ENCODE measurements at regions of chr10 and their contacts with region 1.

Region 1: GRCh38 chr10:115026056-115026745 is 67.0 kb upstream of the ATRNL1 start:
- DNase-seq: peak in 5 of 10 donors; percentile 40 to 65 (median 55)
- H3K4me3 ChIP-seq: peak overlapping the region in 1 of 59 donors; percentile 16
- H3K27ac ChIP-seq: peak overlapping the region in 48 of 59 donors; percentile 6 to 82 (median 62)
- H3K27me3 ChIP-seq: peaks cover 0 to 6% (median 0%) of the 10 kb centered on the region in 45 donors
- CTCF ChIP-seq: peak in 5 of 56 donors; percentile 6 to 20 (median 12)

Region 2: DNA sequence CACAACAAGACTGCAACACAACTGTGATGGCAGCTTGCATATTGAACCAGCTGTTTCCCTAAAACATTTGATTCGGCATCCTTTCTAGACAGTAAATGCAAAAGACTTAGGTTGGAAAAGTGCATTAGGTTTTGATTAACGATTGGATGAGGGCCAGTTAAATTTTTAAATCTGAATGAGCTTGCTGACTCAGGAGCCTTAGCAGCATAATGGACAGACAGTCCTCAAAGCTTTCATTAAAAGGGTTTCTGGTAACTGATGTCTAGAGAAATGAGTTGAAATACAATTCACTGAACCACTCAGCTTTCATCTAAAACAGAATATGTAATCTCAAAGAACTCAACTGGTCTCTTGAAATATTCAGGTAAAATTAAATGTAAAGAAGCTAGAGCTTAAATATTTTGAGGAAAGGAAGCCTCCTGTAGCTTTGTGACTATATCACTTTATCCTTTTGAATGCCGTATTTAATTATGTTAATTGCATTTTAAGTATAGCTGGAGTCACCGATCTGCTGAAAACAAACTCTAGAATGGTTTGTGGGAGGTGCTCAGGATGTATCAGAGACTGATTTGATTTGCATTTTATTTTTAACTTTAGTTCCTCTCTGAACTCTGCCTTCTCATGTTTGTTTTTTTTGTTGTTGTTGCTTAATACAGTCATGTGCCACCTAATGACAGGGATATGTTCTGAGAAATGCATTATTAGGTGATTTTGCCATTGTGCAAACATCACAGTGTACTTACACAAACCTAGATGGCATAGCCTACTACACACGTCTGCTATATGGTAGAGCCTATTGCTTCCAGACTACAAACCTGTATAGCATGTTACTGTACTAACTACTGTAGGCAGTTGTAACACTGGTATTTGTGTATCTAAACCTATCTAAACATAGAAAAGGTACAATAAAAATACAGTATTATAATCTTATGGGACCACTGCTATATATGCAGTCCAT is 37.8 kb after region 1 on chr10:
- intact Hi-C with region 1: loop called in 1 of 2 experiments (anchors 2 kb)
- DNase-seq: no peak
- H3K4me3 ChIP-seq: no peak overlapping the region
- H3K27ac ChIP-seq: peak overlapping the region in 13 of 59 donors; percentile 5 to 71 (median 25)
- H3K27me3 ChIP-seq: peaks cover 0 to 29% (median 0%) of the 10 kb centered on the region in 45 donors
- CTCF ChIP-seq: no peak

Region 3: DNA sequence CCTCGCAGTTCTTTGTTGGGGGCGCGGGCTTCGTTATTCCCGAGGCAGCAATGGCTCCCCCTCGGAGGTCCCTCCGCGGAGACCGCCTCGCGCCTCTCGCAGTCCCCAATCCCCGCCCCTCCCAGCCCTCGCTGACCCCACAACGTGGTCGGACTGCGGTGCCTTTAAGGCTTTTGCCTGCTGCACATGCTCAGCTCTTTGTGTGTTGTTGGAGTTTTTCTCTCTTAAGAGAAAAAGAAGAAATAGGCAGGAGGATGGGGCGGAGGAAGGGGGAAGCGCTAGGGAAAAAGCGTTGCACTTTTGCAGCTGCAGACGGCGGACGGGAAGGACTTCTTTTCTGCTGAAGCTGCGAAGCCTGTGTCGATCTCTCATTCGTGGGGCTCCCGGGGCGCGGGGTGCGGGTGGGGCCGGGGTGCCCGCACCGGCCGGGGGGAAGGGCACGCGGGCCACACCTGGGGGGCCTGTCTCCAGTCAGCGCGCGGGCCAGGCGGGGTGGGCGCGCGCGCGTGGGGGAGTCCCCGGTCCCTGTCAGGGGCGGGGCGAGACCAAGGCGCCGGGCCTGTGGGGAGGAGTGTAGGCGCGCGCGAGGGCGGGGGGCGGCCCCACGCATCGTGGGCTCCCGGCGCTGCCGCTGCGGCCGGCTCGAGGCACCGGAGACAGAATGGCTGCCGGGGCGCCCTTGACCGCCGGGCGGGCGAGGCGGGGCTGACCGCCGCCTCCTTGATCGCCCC is 66.5 kb after region 1 on chr10:
- intact Hi-C with region 1: loop called in 1 of 2 experiments (anchors 2 kb)
- DNase-seq: peak in 6 of 10 donors; percentile 25 to 54 (median 43)
- H3K4me3 ChIP-seq: peak overlapping the region; percentile 48 to 83 (median 70)
- H3K27ac ChIP-seq: peak overlapping the region in 56 of 59 donors; percentile 31 to 94 (median 82)
- H3K27me3 ChIP-seq: peaks cover 0 to 46% (median 7%) of the 10 kb centered on the region in 45 donors
- CTCF ChIP-seq: no peak